Panc1 (cell line): ENCODE measurements at regions of chr4 and their contacts with region 1.

Region 1: DNA sequence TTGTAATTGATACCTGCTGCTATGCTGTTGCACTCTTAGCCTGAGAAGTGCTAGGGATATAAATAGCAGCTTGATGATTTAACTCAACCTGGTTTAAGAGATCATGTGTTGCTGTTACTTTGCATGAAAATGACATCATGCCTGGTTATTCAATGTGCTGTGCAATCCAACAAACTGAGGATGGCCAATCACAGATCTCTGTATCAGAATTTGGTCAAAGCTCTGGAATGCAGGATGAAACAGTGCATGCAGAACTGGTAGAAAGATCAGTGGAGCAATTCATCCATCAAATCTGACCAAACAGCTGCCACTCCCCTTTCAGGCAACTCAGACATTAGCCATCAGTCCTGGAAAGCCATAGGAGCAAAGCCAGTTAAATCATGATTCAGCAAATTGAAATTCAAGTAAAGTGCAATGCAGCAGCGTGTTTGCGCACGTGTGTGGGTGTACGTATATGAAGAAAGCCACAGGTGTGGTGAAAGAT is 160.3 kb upstream of the RASGEF1B start:
- DNase-seq: no peak
- ATAC-seq: no peak
- H3K4me3 ChIP-seq: no peak overlapping the region
- H3K27ac ChIP-seq: no peak overlapping the region
- H3K4me1 ChIP-seq: no peaks in the 10 kb centered on the region
- H3K27me3 ChIP-seq: no peaks in the 10 kb centered on the region
- CTCF ChIP-seq: no peak

Region 2: GRCh38 chr4:81574991-81575390 is 57.0 kb before region 1 on chr4:
- CTCF ChIA-PET with region 1: no interaction called
- POLR2A ChIA-PET with region 1: no interaction called
- in situ Hi-C with region 1: no loop called
- intact Hi-C with region 1: loop called (anchors 10 kb)
- DNase-seq: no peak
- ATAC-seq: no peak
- H3K4me3 ChIP-seq: no peak overlapping the region
- H3K27ac ChIP-seq: no peak overlapping the region
- H3K4me1 ChIP-seq: no peaks in the 10 kb centered on the region
- H3K27me3 ChIP-seq: no peaks in the 10 kb centered on the region
- CTCF ChIP-seq: no peak